Ascending aorta (tissue), 2 donors: ENCODE measurements at regions of chr3 and their contacts with region 1.

Region 1: GRCh38 chr3:149969940-149970715 is 567 bp downstream of the PFN2 start:
- DNase-seq: peak in 1 of 2 donors; percentile 87
- H3K4me3 ChIP-seq: peak overlapping the region; percentile 90 to 98
- H3K27ac ChIP-seq: peak overlapping the region; percentile 91 to 99
- H3K4me1 ChIP-seq: peaks cover 6 to 18% of the 10 kb centered on the region in 2 donors
- H3K27me3 ChIP-seq: no peaks in the 10 kb centered on the region
- CTCF ChIP-seq: no peak

Region 2: GRCh38 chr3:149812606-149813366 is 157.3 kb before region 1 on chr3 and contains the start of gene RNF13:
- intact Hi-C with region 1: loop called (anchors 5 kb)
- DNase-seq: peak; percentile 95 to 99
- H3K4me3 ChIP-seq: peak within 1 kb of the TSS; percentile 79 to 85
- H3K27ac ChIP-seq: peak within 1 kb of the TSS; percentile 99
- H3K4me1 ChIP-seq: peaks cover 0 to 29% of the 10 kb centered on the region in 2 donors
- H3K27me3 ChIP-seq: no peaks in the 10 kb centered on the region
- CTCF ChIP-seq: no peak
- total RNA-seq, gene RNF13: 69.3 TPM

Region 3: GRCh38 chr3:150146991-150147761 is 177.0 kb after region 1 on chr3:
- intact Hi-C with region 1: loop called (anchors 1 kb)
- DNase-seq: no peak
- H3K4me3 ChIP-seq: peak overlapping the region in 1 of 2 donors; percentile 16
- H3K27ac ChIP-seq: peak overlapping the region; percentile 14 to 59
- H3K4me1 ChIP-seq: peaks cover 5 to 12% of the 10 kb centered on the region in 2 donors
- H3K27me3 ChIP-seq: no peaks in the 10 kb centered on the region
- CTCF ChIP-seq: no peak

Region 4: DNA sequence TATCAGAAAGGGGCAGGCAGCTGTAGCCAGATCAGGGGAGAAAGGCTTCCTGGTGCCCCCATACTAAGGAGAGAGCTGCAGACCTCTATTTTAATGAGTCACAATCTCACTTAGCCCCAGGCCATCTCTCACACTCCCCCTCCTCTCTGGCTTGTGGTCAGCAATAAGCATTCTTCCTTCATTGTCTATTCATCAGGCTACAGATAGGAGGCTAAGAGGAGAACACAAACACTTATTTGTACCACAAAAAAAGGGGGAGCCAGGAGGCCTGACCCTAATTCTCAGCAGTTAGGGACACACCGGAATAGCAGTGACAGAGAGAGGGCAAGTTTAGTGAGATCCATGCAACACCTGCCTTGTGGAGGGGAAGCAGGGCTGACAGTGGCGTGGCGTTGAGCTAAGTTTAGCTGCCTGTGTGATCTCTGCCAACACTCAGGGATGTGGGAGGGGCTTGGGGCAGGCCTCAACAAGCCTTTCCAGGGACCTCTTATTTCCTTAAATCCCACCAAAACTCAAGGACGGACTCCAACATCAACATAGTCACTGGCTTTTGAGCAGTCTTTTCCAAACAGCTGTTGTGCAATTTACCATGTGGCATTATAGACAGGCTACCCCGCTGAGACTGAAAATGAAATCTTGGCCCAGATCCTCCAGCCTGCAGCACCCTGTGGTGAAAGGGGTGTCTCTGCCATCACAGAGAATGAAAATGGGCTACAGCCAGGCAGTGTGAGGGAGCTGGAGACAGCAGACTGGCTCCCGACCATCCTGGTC is 246.1 kb after region 1 on chr3:
- intact Hi-C with region 1: loop called (anchors 2 kb)
- DNase-seq: peak; percentile 33 to 84
- H3K4me3 ChIP-seq: peak overlapping the region in 1 of 2 donors; percentile 39
- H3K27ac ChIP-seq: peak overlapping the region; percentile 75 to 80
- H3K4me1 ChIP-seq: peaks cover 5 to 10% of the 10 kb centered on the region in 2 donors
- H3K27me3 ChIP-seq: no peaks in the 10 kb centered on the region
- CTCF ChIP-seq: no peak

Region 5: DNA sequence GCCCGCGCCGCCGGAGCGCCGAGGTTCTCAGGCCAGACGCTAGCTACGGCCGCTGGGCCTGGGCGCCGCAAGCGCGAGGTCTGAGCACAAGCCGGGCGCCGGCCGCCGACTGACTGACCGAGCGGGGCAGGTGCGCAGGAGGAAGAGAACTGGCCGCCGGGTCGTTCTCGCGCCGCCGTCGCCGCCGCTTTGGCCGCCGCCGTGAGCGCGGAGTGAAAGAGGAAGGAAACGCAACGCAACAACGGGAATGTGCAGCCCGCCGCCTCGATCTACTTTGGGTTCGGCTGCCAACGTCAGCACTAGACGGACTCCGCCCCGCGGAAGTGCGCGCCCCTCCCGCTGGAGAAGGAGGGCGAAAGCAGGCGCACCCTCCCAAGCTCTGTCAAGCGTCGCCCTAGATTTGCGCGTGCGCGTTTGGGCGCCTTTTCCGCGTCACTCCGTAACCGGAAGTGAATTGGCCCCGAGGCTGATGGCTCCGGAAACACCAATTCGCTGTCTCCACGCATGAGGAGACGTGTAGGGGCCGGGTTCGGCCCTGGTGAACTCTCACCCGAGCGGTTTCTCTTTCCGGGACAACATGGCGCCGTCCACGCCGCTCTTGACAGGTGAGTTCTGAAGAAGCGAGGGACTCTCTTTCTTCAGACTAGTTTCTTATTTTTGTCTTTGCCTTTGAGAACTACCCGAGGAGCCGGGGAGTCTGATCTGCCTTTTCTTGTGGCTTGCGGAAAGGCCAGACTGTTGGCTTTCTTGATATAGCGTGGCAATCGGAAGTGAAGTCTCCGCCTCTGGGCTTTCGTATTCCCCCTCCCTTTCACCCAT is 576.3 kb after region 1 on chr3 and contains the starts of genes EIF2A and SERP1:
- intact Hi-C with region 1: loop called (anchors 5 kb)
- DNase-seq: peak; percentile 94 to 99
- H3K4me3 ChIP-seq: peak within 1 kb of the TSS; percentile 89 to 99
- H3K27ac ChIP-seq: peak within 1 kb of the TSS; percentile 99 to 100
- H3K4me1 ChIP-seq: peaks cover 0 to 24% of the 10 kb centered on the region in 2 donors
- H3K27me3 ChIP-seq: no peaks in the 10 kb centered on the region
- CTCF ChIP-seq: no peak
- total RNA-seq, gene EIF2A: 83.2 TPM
- total RNA-seq, gene SERP1: 237 TPM